Activated B cell treated with CpG ODN at 0.5 μM for 24 hours (primary cell): ENCODE measurements at regions of chr19 and their contacts with region 1.

Region 1: GRCh38 chr19:32224371-32225244 is 120.8 kb upstream of the ZNF507 start:
- DNase-seq: peak; percentile 55
- ATAC-seq: peak; percentile 70
- H3K4me3 Mint-ChIP-seq: peak overlapping the region; percentile 77
- H3K27ac Mint-ChIP-seq: no peak overlapping the region
- H3K4me1 Mint-ChIP-seq: peaks cover 6% of the 10 kb centered on the region
- H3K27me3 Mint-ChIP-seq: peaks cover 23% of the 10 kb centered on the region
- CTCF ChIP-seq: no peak

Region 2: GRCh38 chr19:30669329-30670010 is 1555.1 kb before region 1 on chr19:
- CTCF ChIA-PET with region 1: interaction called, 8 read pairs
- POLR2A ChIA-PET with region 1: no interaction called
- intact Hi-C with region 1: loop called (anchors 2 kb)
- DNase-seq: no peak
- ATAC-seq: no peak
- H3K4me3 Mint-ChIP-seq: no peak overlapping the region
- H3K27ac Mint-ChIP-seq: no peak overlapping the region
- H3K4me1 Mint-ChIP-seq: no peaks in the 10 kb centered on the region
- H3K27me3 Mint-ChIP-seq: peaks cover 8% of the 10 kb centered on the region
- CTCF ChIP-seq: no peak

Region 3: GRCh38 chr19:32253683-32254508 is 29.3 kb after region 1 on chr19:
- CTCF ChIA-PET with region 1: no interaction called
- POLR2A ChIA-PET with region 1: no interaction called
- intact Hi-C with region 1: no loop called
- DNase-seq: no peak
- ATAC-seq: no peak
- H3K4me3 Mint-ChIP-seq: no peak overlapping the region
- H3K27ac Mint-ChIP-seq: no peak overlapping the region
- H3K4me1 Mint-ChIP-seq: no peaks in the 10 kb centered on the region
- H3K27me3 Mint-ChIP-seq: peaks cover 2% of the 10 kb centered on the region
- CTCF ChIP-seq: no peak

Region 4: DNA sequence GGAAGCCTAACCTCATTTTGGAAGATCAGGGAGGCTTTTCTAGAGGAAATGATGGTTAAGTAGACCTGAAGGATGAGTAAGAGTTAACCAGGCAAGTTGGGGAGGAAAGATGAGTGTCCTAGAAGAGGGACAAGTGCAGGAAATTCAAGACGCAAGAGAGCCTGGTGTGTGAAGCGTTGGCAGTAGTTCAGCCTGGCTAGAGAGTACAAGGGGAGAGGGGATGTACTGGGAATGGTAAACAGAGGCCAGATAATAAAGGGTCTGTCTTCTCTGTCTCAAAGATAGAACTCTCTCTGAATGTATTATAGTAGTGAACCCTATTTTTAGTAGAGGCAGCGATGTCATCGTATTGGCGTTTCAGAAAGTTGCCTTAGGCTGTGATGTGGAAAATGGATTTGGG is 190.6 kb after region 1 on chr19:
- CTCF ChIA-PET with region 1: no interaction called
- POLR2A ChIA-PET with region 1: no interaction called
- intact Hi-C with region 1: no loop called
- DNase-seq: no peak
- ATAC-seq: no peak
- H3K4me3 Mint-ChIP-seq: no peak overlapping the region
- H3K27ac Mint-ChIP-seq: no peak overlapping the region
- H3K4me1 Mint-ChIP-seq: no peaks in the 10 kb centered on the region
- H3K27me3 Mint-ChIP-seq: no peaks in the 10 kb centered on the region
- CTCF ChIP-seq: no peak